ENCODE measurements at regions of chr5 and their contacts with region 1.

Region 1: DNA sequence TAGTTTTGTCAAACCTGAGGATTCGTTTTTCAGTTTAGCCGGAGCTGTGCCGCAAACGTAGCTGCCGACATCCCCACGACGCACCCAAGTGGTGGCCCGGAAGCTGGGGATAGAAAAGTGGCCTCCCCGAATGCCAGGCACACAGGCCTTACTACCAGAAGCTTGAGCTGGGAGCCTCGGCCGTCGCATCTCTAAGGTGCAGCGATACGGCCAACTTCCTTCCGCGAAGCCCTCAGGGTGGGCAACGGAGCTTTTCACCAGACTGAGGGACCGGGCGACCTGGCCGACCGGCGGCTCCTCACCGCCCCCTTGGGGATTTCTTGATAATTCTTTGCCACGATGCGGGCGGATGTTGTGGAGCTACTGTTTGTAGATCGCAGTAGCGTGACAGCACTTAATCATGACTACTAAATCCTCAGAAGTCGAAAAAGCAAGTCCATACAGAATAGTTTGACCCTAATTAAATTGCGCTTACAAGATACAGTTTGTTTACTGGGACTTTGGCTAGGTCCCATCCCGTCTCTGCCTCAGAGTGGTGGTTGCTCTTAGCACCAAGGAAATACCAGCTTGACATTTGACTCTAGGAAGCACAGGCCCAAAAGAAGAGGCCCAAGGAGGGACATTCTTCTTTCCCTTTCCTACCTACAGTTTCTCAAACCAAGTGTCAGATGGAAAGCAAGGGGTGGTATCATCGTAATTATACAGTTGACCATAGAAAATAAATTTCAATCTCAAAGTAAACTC is 613 bp upstream of the TMEM267 start:
- DNase-seq: peak; percentile 85
- H3K4me3 Mint-ChIP-seq: peak overlapping the region; percentile 77
- H3K27ac Mint-ChIP-seq: peak overlapping the region; percentile 94
- H3K4me1 Mint-ChIP-seq: peaks cover 11% of the 10 kb centered on the region
- H3K27me3 Mint-ChIP-seq: no peaks in the 10 kb centered on the region
- CTCF ChIP-seq: peak; percentile 74

Region 2: DNA sequence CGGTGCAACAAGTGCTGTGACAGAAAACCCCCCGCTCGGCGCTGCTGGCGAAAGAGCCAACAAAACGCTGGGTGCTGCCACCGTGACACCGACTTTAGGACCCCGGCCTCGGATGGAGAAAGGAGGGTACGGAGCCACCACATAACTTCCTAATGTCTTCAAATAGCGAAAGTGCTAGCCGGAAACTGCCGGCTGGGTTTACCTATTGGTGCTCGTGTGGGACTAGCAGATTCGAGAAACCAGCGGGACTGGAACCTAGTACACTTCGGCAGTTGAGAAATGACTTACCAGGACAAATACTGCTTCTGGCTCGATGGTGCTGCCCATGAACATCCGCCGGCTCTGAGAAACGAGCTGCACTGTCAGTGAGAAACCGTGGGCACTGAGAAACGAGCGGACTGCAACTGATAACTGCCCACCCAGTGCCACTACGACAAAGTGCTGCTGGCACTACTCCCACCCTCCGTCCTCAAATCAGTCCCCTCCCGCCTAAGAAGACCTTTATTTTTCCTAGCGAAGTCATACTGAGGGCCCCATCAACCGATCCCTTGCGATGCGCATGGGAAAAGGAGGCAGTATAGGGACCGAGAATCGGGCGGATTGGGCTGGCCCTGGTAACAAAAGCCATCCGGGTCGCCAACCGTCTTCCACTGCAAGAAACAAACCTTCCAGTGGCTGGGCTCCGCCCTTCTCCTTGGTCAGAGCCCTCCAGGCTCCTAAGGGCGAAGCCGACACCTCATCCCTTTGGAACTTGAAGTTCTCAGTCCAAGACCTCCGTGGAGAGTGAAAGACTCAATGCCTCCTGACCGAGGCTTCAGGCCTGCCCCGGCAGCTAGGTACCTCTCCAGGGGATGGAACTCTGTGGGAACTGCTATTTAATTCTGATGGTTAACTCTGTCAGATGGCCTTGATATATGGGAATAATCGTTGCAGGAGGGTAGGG is 417.2 kb before region 1 on chr5:
- CTCF ChIA-PET with region 1: no interaction called
- POLR2A ChIA-PET with region 1: interaction called, 24 read pairs
- intact Hi-C with region 1: no loop called
- DNase-seq: peak; percentile 91
- H3K4me3 Mint-ChIP-seq: peak overlapping the region; percentile 99
- H3K27ac Mint-ChIP-seq: peak overlapping the region; percentile 93
- H3K4me1 Mint-ChIP-seq: peaks cover 12% of the 10 kb centered on the region
- H3K27me3 Mint-ChIP-seq: no peaks in the 10 kb centered on the region
- CTCF ChIP-seq: no peak

Region 3: DNA sequence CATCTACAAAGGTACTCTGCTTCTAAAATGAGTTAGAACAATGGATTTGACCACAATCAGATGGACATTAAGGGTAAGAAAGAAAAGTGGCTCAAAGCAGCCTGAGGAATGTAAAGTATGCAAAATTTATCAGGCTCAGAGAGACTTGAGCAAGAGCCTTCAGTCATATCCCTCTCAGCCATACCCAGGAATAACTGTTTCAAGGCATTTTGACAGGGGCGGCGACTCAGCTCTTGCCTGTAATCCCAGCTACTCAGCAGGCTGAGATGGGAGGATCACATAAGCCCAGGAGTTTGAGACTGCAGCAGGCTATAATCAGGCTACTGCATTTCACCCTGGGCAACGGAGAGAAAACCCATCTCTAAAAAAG is 405.3 kb before region 1 on chr5:
- CTCF ChIA-PET with region 1: no interaction called
- POLR2A ChIA-PET with region 1: no interaction called
- intact Hi-C with region 1: no loop called
- DNase-seq: peak; percentile 54
- H3K4me3 Mint-ChIP-seq: no peak overlapping the region
- H3K27ac Mint-ChIP-seq: no peak overlapping the region
- H3K4me1 Mint-ChIP-seq: peaks cover 28% of the 10 kb centered on the region
- H3K27me3 Mint-ChIP-seq: no peaks in the 10 kb centered on the region
- CTCF ChIP-seq: no peak

Region 4: DNA sequence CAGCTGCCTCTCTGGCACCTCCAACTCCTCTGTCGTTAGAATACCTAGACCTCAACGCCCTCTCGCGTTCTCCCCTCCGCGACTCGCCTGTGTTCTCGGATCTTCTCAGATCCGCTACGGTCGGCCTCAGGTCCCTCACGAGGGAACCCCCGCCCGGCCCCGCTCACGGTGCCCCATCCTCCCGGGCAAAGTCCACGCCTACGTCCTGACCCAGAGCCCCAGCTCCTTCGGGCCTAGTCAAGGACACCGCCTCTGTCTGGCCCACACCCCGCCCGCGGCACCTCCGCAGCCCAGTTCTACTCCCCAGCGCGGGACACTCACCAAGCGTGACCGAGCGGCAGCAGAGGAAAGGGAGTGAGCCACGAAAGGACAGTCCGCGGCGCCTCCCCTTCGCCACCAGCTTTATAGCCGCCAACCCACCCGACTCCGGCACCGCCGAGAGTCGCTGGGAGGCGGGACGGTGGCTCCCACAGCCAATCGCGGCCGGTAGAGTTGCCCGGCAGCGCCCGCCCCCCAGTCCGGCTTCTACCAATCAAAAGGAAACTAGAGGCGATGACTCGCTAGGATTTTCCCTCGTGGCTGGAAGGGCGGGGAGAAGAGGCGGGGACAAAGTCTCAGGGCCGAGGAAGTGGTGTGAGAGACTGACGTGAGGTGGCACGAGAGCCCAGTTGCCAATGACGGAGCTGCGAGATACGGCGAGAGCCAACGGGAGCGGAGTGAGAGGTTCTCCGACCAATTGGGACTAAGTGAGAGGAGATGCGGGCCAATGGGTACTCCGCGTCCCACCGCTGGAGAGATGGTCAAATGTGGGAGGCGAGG is 171.0 kb before region 1 on chr5 and contains the start of gene HMGCS1:
- CTCF ChIA-PET with region 1: interaction called, 12 read pairs
- POLR2A ChIA-PET with region 1: interaction called, 20 read pairs
- intact Hi-C with region 1: loop called (anchors 2 kb)
- DNase-seq: peak; percentile 99
- H3K4me3 Mint-ChIP-seq: peak within 1 kb of the TSS; percentile 100
- H3K27ac Mint-ChIP-seq: peak within 1 kb of the TSS; percentile 96
- H3K4me1 Mint-ChIP-seq: peaks cover 53% of the 10 kb centered on the region
- H3K27me3 Mint-ChIP-seq: no peaks in the 10 kb centered on the region
- CTCF ChIP-seq: no peak
- total RNA-seq, gene HMGCS1: 36.2 and 42.6 TPM in 2 replicates

Region 5: GRCh38 chr5:43412156-43412555 is 72.1 kb before region 1 on chr5 and contains the start of gene CCL28:
- CTCF ChIA-PET with region 1: interaction called, 22 read pairs
- POLR2A ChIA-PET with region 1: interaction called, 17 read pairs
- intact Hi-C with region 1: no loop called
- DNase-seq: no peak
- H3K4me3 Mint-ChIP-seq: no peak within 1 kb of the TSS
- H3K27ac Mint-ChIP-seq: no peak within 1 kb of the TSS
- H3K4me1 Mint-ChIP-seq: peaks cover 6% of the 10 kb centered on the region
- H3K27me3 Mint-ChIP-seq: no peaks in the 10 kb centered on the region
- CTCF ChIP-seq: no peak
- total RNA-seq, gene CCL28: 1.6 and 2.2 TPM in 2 replicates

Region 6: DNA sequence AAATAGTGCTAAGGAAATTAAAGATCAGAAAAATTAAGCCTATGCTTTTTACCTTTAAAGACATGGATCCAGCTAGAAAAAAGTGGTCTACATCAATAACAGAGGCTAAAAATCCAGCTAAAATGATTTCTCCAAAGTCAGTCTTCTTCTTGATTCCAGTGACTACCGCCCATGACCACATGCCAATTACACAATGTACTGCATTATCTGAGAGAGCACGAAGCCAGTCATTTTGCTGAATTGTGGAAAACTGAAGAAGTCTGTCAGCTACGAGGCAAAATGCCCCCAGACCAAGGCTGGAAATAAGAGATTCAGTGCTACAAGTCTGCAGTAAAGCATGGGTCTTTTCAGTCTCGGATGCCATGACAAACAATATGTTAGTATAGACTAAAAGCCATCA is 30.7 kb before region 1 on chr5:
- CTCF ChIA-PET with region 1: interaction called, 13 read pairs
- POLR2A ChIA-PET with region 1: interaction called, 6 read pairs
- intact Hi-C with region 1: no loop called
- DNase-seq: no peak
- H3K4me3 Mint-ChIP-seq: no peak overlapping the region
- H3K27ac Mint-ChIP-seq: no peak overlapping the region
- H3K4me1 Mint-ChIP-seq: no peaks in the 10 kb centered on the region
- H3K27me3 Mint-ChIP-seq: no peaks in the 10 kb centered on the region
- CTCF ChIP-seq: no peak

Region 7: DNA sequence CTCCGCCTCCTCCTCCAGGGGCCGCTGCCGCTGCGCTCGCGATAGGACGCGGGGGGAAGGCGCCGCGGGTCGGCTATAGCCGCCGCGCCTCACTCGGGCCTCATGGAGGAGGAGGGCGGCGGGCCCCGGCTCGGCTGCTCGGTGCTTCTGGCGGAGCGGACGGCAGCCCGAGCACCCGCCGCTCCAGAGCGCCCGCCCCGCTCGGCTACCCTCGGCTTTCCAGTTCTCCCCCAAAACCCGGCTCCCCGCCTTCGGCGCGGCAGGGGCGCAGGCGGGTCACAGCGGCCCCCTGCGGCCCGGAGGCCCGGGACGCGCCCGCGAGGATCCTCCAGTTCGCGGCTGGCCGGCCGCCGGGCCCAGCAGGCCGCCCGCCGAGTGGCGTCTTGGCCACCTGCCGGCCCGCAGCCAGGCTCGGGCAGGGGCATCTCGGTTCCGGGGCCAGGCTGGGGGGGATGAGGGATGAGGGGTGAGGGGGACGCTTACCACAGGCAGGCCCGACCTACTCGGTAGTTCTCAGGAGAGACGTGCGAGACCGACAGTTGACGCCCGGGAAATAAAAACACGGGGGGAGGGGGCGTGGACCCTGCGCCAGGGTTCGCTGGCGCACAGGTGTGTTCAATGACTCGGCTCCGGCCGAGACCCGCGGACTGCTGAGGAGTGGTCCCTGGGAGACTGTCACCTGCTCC is 72.7 kb after region 1 on chr5 and contains the start of gene PAIP1:
- CTCF ChIA-PET with region 1: interaction called, 7 read pairs
- POLR2A ChIA-PET with region 1: interaction called, 31 read pairs
- intact Hi-C with region 1: no loop called
- DNase-seq: peak; percentile 87
- H3K4me3 Mint-ChIP-seq: no peak within 1 kb of the TSS
- H3K27ac Mint-ChIP-seq: peak within 1 kb of the TSS; percentile 84
- H3K4me1 Mint-ChIP-seq: peaks cover 6% of the 10 kb centered on the region
- H3K27me3 Mint-ChIP-seq: no peaks in the 10 kb centered on the region
- CTCF ChIP-seq: peak; percentile 57
- total RNA-seq, gene PAIP1: 105 and 116 TPM in 2 replicates